CD4-positive, alpha-beta memory T cell (primary cell): ENCODE measurements at regions of chr22 and their contacts with region 1.

Region 1: DNA sequence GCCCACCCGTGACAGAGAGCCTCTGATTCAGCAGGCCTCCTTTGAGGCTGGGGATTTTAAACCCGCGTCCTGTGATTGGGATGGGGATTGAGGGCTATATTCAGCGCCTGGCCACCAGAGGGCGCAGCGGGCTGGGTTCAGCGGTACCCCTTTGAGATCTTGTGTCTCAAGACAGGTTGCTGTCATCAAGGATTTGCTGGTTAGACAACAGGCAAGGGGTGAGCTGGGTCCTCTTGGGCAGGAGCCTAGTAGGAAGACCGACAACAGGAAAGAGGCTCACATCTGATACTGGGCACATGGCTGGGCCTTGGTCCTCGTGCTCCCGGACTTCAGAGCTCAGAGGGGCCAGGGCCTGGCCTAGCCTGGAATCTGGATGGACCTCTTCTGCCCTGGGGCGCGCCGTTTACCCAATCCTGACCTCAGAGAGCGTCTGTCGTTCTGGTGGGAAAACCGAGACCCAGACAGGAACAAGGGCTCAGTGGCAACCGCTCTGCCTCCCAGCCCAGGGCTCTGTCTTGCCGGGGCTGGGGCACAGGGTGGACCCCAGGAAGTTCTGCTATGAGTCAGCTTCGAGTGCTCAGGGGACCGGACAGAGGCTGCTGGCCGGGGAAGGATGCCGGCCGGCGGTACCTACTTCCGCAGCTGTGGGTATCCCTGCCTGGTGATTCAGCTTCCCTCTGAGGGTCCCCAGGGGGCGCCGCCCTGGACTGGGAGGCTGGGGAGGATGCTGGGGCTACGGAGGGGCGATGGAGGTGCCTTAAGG is 929 bp upstream of the SLC35E4 start:
- DNase-seq: peak; percentile 84 to 87 (median 86)
- H3K4me3 ChIP-seq: peak overlapping the region; percentile 81 to 91
- H3K4me3 Mint-ChIP-seq: peak overlapping the region; percentile 81 to 95 (median 84)
- H3K27ac ChIP-seq: peak overlapping the region; percentile 79
- H3K27ac Mint-ChIP-seq: peak overlapping the region; percentile 88 to 98 (median 93)
- H3K4me1 ChIP-seq: peaks cover 34% of the 10 kb centered on the region
- H3K4me1 Mint-ChIP-seq: peaks cover 10 to 29% (median 16%) of the 10 kb centered on the region in 4 donors
- H3K27me3 ChIP-seq: no peaks in the 10 kb centered on the region
- H3K27me3 Mint-ChIP-seq: no peaks in the 10 kb centered on the region

Region 2: DNA sequence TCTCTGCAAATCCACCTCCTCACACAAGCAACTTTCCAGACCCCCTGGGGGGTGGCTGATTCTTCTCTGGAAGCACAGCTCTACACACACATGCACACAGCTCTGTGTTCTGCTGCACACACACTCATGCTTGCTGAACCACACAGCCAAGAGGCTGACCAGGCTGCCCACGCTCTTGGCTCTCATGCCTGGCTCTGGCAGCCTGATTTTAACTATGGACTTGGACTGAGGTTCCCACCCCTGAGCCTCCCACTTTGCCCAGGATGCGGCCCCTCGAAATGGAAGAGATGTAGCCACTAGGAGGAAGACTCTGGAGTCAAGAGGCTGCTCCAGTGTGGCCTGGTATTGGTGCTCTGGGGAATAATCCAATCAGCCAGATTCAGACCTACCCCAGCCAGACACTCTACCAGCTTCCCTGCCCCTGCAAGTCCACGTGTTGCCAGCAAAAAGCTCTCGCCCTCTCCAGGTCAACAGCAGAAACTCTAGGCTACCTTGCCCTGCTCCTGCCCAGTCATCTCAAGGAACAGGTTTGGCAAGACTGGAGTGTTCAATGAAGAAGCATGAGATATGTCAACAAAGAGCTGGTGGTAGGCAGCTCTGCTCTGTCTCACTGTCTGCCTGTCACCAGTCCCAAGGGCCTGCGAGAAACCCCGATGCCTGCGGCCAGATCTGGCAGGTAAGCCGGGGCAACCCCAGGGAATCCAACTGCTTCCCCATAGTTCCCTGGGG is 336.5 kb before region 1 on chr22:
- CTCF ChIA-PET with region 1: no interaction called
- POLR2A ChIA-PET with region 1: no interaction called
- intact Hi-C with region 1: no loop called
- DNase-seq: peak in 1 of 5 donors; percentile 21
- H3K4me3 ChIP-seq: no peak overlapping the region
- H3K4me3 Mint-ChIP-seq: peak overlapping the region in 2 of 8 donors; percentile 62
- H3K27ac ChIP-seq: peak overlapping the region; percentile 24
- H3K27ac Mint-ChIP-seq: peak overlapping the region; percentile 77 to 92 (median 81)
- H3K4me1 ChIP-seq: peaks cover 74% of the 10 kb centered on the region
- H3K4me1 Mint-ChIP-seq: peaks cover 40 to 76% (median 63%) of the 10 kb centered on the region in 4 donors
- H3K27me3 ChIP-seq: no peaks in the 10 kb centered on the region
- H3K27me3 Mint-ChIP-seq: no peaks in the 10 kb centered on the region

Region 3: DNA sequence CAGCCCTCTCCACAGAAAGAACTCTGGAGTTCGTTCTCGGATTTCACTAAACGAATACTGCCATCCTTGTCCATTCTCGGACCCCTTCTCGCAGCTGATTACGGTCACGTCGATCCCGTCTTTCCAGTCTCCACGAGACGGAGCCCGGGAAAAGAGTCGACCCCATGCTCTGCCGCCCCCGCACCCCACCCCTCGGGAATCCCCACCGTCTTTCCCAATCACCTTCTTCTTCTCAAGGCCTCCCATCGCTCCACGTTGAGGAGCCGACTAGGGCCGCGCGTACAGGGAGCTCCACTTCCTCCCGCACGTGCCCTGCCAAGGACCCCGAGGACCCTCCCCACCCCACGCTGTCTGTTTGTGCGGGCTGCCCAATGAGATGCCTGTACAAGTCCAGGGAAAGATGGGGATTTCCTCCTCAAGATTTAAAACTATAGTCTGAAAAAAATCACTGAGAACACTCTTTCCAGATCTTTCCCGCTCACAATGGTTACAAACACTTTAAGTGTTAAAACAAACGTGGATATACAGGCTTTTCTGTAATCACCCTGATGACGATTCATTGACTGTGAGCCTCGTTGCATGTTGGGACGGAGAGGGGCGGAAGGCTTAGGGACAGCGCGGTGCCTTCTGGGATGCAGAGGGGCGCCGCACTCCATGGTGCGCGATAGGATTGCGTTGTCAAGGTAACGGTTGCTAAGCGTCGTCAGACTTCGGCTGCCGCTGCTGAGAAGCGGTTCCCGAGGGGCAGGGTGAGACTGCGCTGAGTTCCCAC is 42.9 kb before region 1 on chr22 and contains the start of gene PES1:
- CTCF ChIA-PET with region 1: interaction called, 5 read pairs
- POLR2A ChIA-PET with region 1: interaction called, 9 read pairs
- intact Hi-C with region 1: loop called (anchors 1 kb)
- DNase-seq: peak; percentile 96 to 98 (median 97)
- H3K4me3 ChIP-seq: peak within 1 kb of the TSS; percentile 50 to 99
- H3K4me3 Mint-ChIP-seq: no peak within 1 kb of the TSS
- H3K27ac ChIP-seq: peak within 1 kb of the TSS; percentile 78
- H3K27ac Mint-ChIP-seq: peak within 1 kb of the TSS in 1 of 7 donors; percentile 82
- H3K4me1 ChIP-seq: peaks cover 22% of the 10 kb centered on the region
- H3K4me1 Mint-ChIP-seq: peaks cover 0 to 10% (median 3%) of the 10 kb centered on the region in 4 donors
- H3K27me3 ChIP-seq: no peaks in the 10 kb centered on the region
- H3K27me3 Mint-ChIP-seq: peaks cover 3 to 7% of the 10 kb centered on the region in 2 donors
- total RNA-seq, gene PES1: 50.1 to 51.6 TPM

Region 4: DNA sequence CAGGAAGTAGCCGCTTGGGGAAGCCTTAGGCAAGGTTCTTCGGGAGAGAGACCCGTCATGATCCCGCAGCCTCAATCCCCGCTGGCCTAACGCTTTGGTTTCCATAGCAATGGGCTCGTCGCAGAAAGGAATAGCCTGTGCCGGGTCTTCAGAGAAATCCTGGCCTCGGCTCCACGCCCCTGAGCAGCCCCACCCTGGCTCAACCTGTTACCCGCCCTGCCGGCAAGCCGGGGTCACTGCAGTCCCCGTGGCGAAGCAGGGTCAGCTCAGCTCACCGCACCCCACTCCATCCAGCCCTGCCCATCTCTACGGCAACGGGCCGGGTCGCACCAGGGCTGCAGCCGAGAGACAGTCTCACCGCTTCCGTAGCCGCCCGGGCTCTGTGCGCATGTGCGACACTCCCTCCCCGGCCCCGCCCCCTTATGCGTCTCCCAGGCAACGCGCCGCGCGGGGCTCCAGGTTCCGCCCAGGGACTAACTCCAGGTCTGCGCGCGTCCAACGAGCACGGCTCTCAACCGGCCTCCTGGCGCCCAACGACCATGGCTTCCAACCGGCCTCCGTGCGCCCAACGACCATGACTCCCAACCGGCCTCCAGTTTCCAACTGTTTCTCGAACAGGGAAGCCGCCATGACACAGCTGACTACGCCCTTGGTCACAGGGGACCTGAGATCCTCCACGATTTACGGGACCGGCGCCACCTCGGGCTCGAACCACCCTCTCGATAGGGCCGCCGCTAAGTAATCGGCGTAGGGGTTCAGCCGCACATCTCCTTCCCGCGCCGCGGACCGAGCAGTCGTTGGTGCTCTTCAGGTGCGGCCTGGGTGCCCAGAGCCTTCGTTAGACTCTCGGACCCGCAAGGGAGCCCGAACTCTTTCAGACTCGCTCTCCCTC is 33.1 kb after region 1 on chr22 and contains the start of gene DUSP18:
- CTCF ChIA-PET with region 1: interaction called, 22 read pairs
- POLR2A ChIA-PET with region 1: interaction called, 24 read pairs
- intact Hi-C with region 1: loop called (anchors 1 kb)
- DNase-seq: peak; percentile 89 to 95 (median 92)
- H3K4me3 ChIP-seq: peak within 1 kb of the TSS; percentile 79 to 84
- H3K4me3 Mint-ChIP-seq: peak within 1 kb of the TSS; percentile 90 to 99 (median 96)
- H3K27ac ChIP-seq: peak within 1 kb of the TSS; percentile 61
- H3K27ac Mint-ChIP-seq: peak within 1 kb of the TSS; percentile 80 to 99 (median 94)
- H3K4me1 ChIP-seq: peaks cover 13% of the 10 kb centered on the region
- H3K4me1 Mint-ChIP-seq: peaks cover 16 to 28% (median 21%) of the 10 kb centered on the region in 4 donors
- H3K27me3 ChIP-seq: no peaks in the 10 kb centered on the region
- H3K27me3 Mint-ChIP-seq: no peaks in the 10 kb centered on the region
- total RNA-seq, gene DUSP18: 16.8 to 16.9 TPM

Region 5: GRCh38 chr22:30754971-30755756 is 120.5 kb after region 1 on chr22:
- CTCF ChIA-PET with region 1: interaction called, 75 read pairs
- POLR2A ChIA-PET with region 1: interaction called, 33 read pairs
- intact Hi-C with region 1: no loop called
- DNase-seq: peak in 4 of 5 donors; percentile 22 to 34 (median 25)
- H3K4me3 ChIP-seq: no peak overlapping the region
- H3K4me3 Mint-ChIP-seq: no peak overlapping the region
- H3K27ac ChIP-seq: no peak overlapping the region
- H3K27ac Mint-ChIP-seq: no peak overlapping the region
- H3K4me1 ChIP-seq: no peaks in the 10 kb centered on the region
- H3K4me1 Mint-ChIP-seq: no peaks in the 10 kb centered on the region
- H3K27me3 ChIP-seq: no peaks in the 10 kb centered on the region
- H3K27me3 Mint-ChIP-seq: no peaks in the 10 kb centered on the region

Region 6: DNA sequence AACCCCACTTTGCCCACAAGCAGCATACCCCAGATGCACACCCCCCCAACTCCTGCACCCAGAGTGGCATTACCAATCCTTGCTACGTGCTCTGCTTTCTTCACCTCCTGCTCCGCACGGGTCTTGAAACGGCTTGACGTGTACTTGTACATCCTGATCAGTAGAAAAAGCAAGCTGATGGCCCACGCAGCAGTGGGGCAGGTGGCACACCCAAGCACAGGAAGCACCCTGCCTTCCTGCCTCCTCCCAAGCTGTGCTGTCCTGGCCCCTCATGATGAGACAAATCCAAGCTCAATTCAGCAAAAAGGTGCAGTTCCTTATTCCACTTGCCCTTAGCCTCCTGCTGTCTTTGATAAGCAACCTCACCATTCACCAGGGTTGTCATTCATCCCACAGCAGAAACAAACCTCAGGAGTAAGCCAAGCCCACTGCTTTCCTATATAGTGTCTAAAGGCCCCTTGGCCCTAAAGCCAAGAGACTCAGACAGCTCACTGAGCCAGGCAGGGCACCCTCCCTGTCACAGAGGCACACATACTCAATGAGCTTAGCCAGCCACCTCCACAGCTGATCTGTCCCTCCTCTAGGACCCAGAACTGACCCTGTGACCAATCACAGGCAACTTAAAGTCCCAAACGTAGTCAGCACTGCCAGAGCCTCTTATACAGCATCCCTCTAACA is 306.2 kb after region 1 on chr22:
- CTCF ChIA-PET with region 1: interaction called, 5 read pairs
- POLR2A ChIA-PET with region 1: interaction called, 11 read pairs
- intact Hi-C with region 1: no loop called
- DNase-seq: peak; percentile 49 to 66 (median 60)
- H3K4me3 ChIP-seq: peak overlapping the region; percentile 48 to 63
- H3K4me3 Mint-ChIP-seq: peak overlapping the region; percentile 86 to 94 (median 90)
- H3K27ac ChIP-seq: peak overlapping the region; percentile 57
- H3K27ac Mint-ChIP-seq: peak overlapping the region; percentile 89 to 97 (median 94)
- H3K4me1 ChIP-seq: peaks cover 88% of the 10 kb centered on the region
- H3K4me1 Mint-ChIP-seq: peaks cover 57 to 96% (median 77%) of the 10 kb centered on the region in 4 donors
- H3K27me3 ChIP-seq: no peaks in the 10 kb centered on the region
- H3K27me3 Mint-ChIP-seq: no peaks in the 10 kb centered on the region

Region 7: GRCh38 chr22:31107178-31107893 is 472.7 kb after region 1 on chr22 and contains the start of gene SELENOM:
- CTCF ChIA-PET with region 1: interaction called, 4 read pairs
- POLR2A ChIA-PET with region 1: interaction called, 11 read pairs
- intact Hi-C with region 1: no loop called
- DNase-seq: peak; percentile 84 to 90 (median 85)
- H3K4me3 ChIP-seq: peak within 1 kb of the TSS; percentile 80 to 97
- H3K4me3 Mint-ChIP-seq: peak within 1 kb of the TSS; percentile 89 to 97 (median 94)
- H3K27ac ChIP-seq: peak within 1 kb of the TSS; percentile 62
- H3K27ac Mint-ChIP-seq: peak within 1 kb of the TSS; percentile 86 to 96 (median 94)
- H3K4me1 ChIP-seq: peaks cover 20% of the 10 kb centered on the region
- H3K4me1 Mint-ChIP-seq: peaks cover 17 to 31% (median 24%) of the 10 kb centered on the region in 4 donors
- H3K27me3 ChIP-seq: no peaks in the 10 kb centered on the region
- H3K27me3 Mint-ChIP-seq: no peaks in the 10 kb centered on the region
- total RNA-seq, gene SELENOM: 64.2 to 68.6 TPM

Region 8: GRCh38 chr22:31345331-31346254 is 710.9 kb after region 1 on chr22:
- CTCF ChIA-PET with region 1: no interaction called
- POLR2A ChIA-PET with region 1: no interaction called
- intact Hi-C with region 1: loop called (anchors 5 kb)
- DNase-seq: peak; percentile 91 to 94 (median 92)
- H3K4me3 ChIP-seq: peak overlapping the region; percentile 17 to 73
- H3K4me3 Mint-ChIP-seq: peak overlapping the region; percentile 85 to 98 (median 89)
- H3K27ac ChIP-seq: peak overlapping the region; percentile 56
- H3K27ac Mint-ChIP-seq: peak overlapping the region; percentile 78 to 96 (median 92)
- H3K4me1 ChIP-seq: peaks cover 52% of the 10 kb centered on the region
- H3K4me1 Mint-ChIP-seq: peaks cover 35 to 60% (median 43%) of the 10 kb centered on the region in 4 donors
- H3K27me3 ChIP-seq: no peaks in the 10 kb centered on the region
- H3K27me3 Mint-ChIP-seq: no peaks in the 10 kb centered on the region